ENCODE measurements at regions of chr1 and their contacts with region 1.

Region 1: GRCh38 chr1:225772323-225772768 is 5.3 kb upstream of the SRP9 start:
- DNase-seq: peak in 1 of 2 donors; percentile 92
- H3K4me3 ChIP-seq: no peak overlapping the region
- H3K27ac ChIP-seq: peak overlapping the region in 1 of 2 donors; percentile 15
- H3K4me1 ChIP-seq: peaks cover 3 to 20% of the 10 kb centered on the region in 2 donors
- H3K27me3 ChIP-seq: no peaks in the 10 kb centered on the region
- CTCF ChIP-seq: peak; percentile 84 to 93 (median 90)

Region 2: GRCh38 chr1:225554216-225554812 is 218.0 kb before region 1 on chr1:
- intact Hi-C with region 1: loop called (anchors 5 kb)
- DNase-seq: no peak
- H3K4me3 ChIP-seq: no peak overlapping the region
- H3K27ac ChIP-seq: no peak overlapping the region
- H3K4me1 ChIP-seq: peaks cover 0 to 11% of the 10 kb centered on the region in 2 donors
- H3K27me3 ChIP-seq: no peaks in the 10 kb centered on the region
- CTCF ChIP-seq: peak in 2 of 3 experiments; percentile 48 to 59

Region 3: GRCh38 chr1:225578251-225578950 is 193.9 kb before region 1 on chr1:
- intact Hi-C with region 1: loop called (anchors 5 kb)
- DNase-seq: no peak
- H3K4me3 ChIP-seq: no peak overlapping the region
- H3K27ac ChIP-seq: peak overlapping the region in 1 of 2 donors; percentile 30
- H3K4me1 ChIP-seq: peaks cover 4 to 30% of the 10 kb centered on the region in 2 donors
- H3K27me3 ChIP-seq: no peaks in the 10 kb centered on the region
- CTCF ChIP-seq: no peak

Region 4: DNA sequence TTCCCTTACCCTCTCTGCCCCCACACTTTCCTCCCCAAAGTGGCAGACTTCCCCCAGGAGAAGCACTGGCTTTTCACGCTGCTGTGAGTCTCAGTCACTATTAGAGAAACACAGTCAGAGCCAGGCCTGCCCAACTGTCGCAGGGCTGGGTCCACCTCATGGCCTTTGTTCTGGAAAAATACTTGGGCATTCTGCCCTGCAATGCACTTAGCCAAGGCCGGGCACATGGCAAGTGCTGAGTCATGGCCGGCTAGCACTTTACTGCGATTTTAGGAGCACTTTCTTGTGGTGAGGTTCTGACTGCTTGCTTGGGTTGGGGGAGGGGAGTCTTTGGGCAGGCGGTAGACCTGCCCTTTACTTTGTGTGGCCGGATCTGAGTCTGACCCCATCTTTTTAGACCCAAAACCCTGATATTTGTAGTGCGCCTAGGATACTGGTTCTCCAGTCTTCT is 45.3 kb after region 1 on chr1:
- intact Hi-C with region 1: no loop called
- DNase-seq: peak; percentile 84 to 96
- H3K4me3 ChIP-seq: peak overlapping the region in 1 of 2 donors; percentile 37
- H3K27ac ChIP-seq: peak overlapping the region; percentile 89 to 90
- H3K4me1 ChIP-seq: peaks cover 38 to 62% of the 10 kb centered on the region in 2 donors
- H3K27me3 ChIP-seq: no peaks in the 10 kb centered on the region
- CTCF ChIP-seq: no peak

Measured in ascending aorta (tissue), 2 donors.